Mammary epithelial cell (primary cell): ENCODE measurements at regions of chr1 and their contacts with region 1.

Region 1: GRCh38 chr1:109201123-109201703 is 12.5 kb upstream of the SARS1 start:
- DNase-seq: peak; percentile 93
- H3K4me3 ChIP-seq: no peak overlapping the region
- H3K27ac ChIP-seq: peak overlapping the region; percentile 40
- H3K4me1 ChIP-seq: peaks cover 35% of the 10 kb centered on the region
- H3K27me3 ChIP-seq: no peaks in the 10 kb centered on the region
- CTCF ChIP-seq: peak; percentile 85 to 91

Region 2: DNA sequence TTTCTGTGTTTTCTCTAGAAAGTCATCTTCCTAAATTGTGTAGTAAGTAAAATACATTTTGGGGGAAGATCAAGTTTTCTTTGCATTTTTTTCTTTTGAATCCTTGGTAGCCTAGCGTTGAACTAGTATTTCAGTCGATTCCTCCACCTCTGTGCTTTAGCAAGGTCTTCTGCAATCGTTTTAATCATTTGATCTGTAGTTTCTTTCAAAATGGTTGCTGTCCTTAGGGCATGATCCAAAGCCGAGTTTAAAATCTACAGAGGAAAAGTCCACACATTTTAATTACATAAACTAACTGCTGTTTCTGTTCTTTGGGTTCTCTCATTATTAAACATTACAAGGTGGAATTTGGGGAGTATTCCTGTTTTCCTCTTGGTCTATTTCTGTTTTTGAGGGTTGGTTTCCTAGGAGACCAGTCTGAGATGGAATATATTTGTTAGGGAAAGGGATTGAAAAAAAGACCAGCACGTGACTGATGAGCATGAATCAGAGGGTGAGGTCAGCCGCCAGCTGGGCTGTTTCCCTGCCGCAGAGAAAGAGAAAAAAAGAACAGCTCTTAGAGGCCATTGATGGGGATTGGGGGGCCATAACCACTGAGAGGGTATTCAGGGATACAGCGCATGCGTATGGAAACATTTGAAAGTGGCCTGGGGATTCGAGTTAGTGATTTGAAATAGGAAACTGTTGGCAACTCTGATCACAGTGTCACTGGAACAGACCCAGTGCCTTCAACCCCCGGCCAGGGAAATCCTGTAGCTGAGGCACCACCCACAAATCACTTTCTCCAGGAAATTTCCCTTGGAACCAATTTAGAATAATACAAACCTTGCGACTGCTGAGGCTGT is 384.9 kb before region 1 on chr1:
- CTCF ChIA-PET with region 1: no interaction called
- dilution Hi-C with region 1: no loop called
- in situ Hi-C with region 1: no loop called
- intact Hi-C with region 1: no loop called
- DNase-seq: peak; percentile 90
- H3K4me3 ChIP-seq: peak overlapping the region; percentile 4 to 29 (median 13)
- H3K27ac ChIP-seq: peak overlapping the region; percentile 99
- H3K4me1 ChIP-seq: peaks cover 21% of the 10 kb centered on the region
- H3K27me3 ChIP-seq: no peaks in the 10 kb centered on the region
- CTCF ChIP-seq: no peak

Region 3: GRCh38 chr1:109161858-109162606 is 39.2 kb before region 1 on chr1:
- CTCF ChIA-PET with region 1: no interaction called
- dilution Hi-C with region 1: loop called (anchors 5 kb)
- in situ Hi-C with region 1: no loop called
- intact Hi-C with region 1: no loop called
- DNase-seq: peak; percentile 84
- H3K4me3 ChIP-seq: peak overlapping the region in 1 of 3 experiments; percentile 24
- H3K27ac ChIP-seq: no peak overlapping the region
- H3K4me1 ChIP-seq: peaks cover 17% of the 10 kb centered on the region
- H3K27me3 ChIP-seq: no peaks in the 10 kb centered on the region
- CTCF ChIP-seq: no peak

Region 4: DNA sequence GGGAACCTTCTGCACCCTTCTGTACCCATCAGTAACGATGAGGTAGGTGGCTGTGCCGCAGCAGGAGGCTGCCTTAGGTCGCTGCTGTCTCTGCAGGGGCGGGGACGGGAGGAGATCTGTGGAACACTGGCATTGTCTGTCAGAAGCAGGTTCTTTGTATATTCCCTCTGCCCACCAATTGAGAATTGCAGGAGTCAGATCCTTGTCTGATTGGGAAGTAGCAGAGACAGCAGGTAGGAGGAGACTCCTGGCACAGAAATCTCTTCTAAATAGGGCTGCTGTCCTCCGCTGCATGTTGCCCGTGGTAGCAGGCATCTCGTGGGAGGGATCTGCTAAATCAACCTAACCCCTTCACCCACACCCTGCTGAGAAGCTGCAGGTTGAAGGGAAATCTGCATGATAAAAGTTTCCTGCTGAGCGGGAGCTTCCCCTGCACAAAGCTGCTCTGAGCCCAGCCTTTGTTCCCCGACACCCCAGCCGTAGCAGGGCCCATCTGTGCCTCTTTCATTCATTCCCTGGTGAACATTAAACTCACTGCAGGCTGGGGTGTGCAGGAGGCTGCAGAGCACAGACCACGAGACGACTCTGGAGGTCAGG is 28.4 kb after region 1 on chr1:
- CTCF ChIA-PET with region 1: no interaction called
- dilution Hi-C with region 1: no loop called
- in situ Hi-C with region 1: no loop called
- intact Hi-C with region 1: loop called (anchors 1 kb)
- DNase-seq: no peak
- H3K4me3 ChIP-seq: no peak overlapping the region
- H3K27ac ChIP-seq: no peak overlapping the region
- H3K4me1 ChIP-seq: peaks cover 14% of the 10 kb centered on the region
- H3K27me3 ChIP-seq: no peaks in the 10 kb centered on the region
- CTCF ChIP-seq: no peak

Region 5: GRCh38 chr1:109254953-109255651 is 53.9 kb after region 1 on chr1:
- CTCF ChIA-PET with region 1: interaction called, 6 read pairs
- dilution Hi-C with region 1: no loop called
- in situ Hi-C with region 1: loop called in 1 of 2 experiments (anchors 5 kb)
- intact Hi-C with region 1: loop called (anchors 1 kb)
- DNase-seq: no peak
- H3K4me3 ChIP-seq: peak overlapping the region in 2 of 3 experiments; percentile 25 to 26
- H3K27ac ChIP-seq: peak overlapping the region; percentile 54
- H3K4me1 ChIP-seq: peaks cover 52% of the 10 kb centered on the region
- H3K27me3 ChIP-seq: no peaks in the 10 kb centered on the region
- CTCF ChIP-seq: peak; percentile 19 to 45

Region 6: GRCh38 chr1:109290998-109291397 is 89.8 kb after region 1 on chr1:
- CTCF ChIA-PET with region 1: no interaction called
- dilution Hi-C with region 1: loop called (anchors 5 kb)
- in situ Hi-C with region 1: no loop called
- intact Hi-C with region 1: no loop called
- DNase-seq: no peak
- H3K4me3 ChIP-seq: no peak overlapping the region
- H3K27ac ChIP-seq: no peak overlapping the region
- H3K4me1 ChIP-seq: no peaks in the 10 kb centered on the region
- H3K27me3 ChIP-seq: no peaks in the 10 kb centered on the region
- CTCF ChIP-seq: no peak

Region 7: GRCh38 chr1:109404838-109405237 is 203.6 kb after region 1 on chr1:
- CTCF ChIA-PET with region 1: no interaction called
- dilution Hi-C with region 1: no loop called
- in situ Hi-C with region 1: loop called in 1 of 2 experiments (anchors 5 kb)
- intact Hi-C with region 1: no loop called
- DNase-seq: no peak
- H3K4me3 ChIP-seq: no peak overlapping the region
- H3K27ac ChIP-seq: no peak overlapping the region
- H3K4me1 ChIP-seq: no peaks in the 10 kb centered on the region
- H3K27me3 ChIP-seq: no peaks in the 10 kb centered on the region
- CTCF ChIP-seq: no peak